Activated CD4-positive, alpha-beta T cell treated with anti-CD3 and anti-CD28 coated beads for 36 hours (primary cell): ENCODE measurements at regions of chr10 and their contacts with region 1.

Region 1: GRCh38 chr10:59865101-59865500 is 41.3 kb downstream of the CCDC6 start:
- DNase-seq: no peak
- ATAC-seq: peak; percentile 34
- H3K4me3 Mint-ChIP-seq: no peak overlapping the region
- H3K27ac Mint-ChIP-seq: no peak overlapping the region
- H3K4me1 Mint-ChIP-seq: peaks cover 65% of the 10 kb centered on the region
- H3K27me3 Mint-ChIP-seq: no peaks in the 10 kb centered on the region

Region 2: DNA sequence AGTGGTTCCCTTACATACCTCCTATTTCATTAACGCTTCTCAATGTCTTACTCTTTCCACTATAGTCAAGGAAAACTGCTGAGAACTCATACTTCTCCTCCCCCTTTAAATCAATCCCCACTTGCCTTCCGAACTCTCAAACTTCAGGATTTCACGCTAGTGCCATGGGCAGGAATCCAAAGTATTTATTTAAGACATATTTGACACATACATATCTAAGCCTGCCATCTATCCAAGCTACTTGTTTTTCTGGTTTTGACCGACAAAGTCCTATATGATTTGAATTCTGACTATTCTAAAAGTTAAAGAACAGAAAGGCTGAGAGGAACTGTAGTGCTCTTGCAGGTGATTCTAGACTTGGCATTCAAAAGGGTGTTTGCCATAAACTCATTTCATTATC is 10.5 kb before region 1 on chr10:
- CTCF ChIA-PET with region 1: interaction called, 11 read pairs
- POLR2A ChIA-PET with region 1: interaction called, 3 read pairs
- intact Hi-C with region 1: no loop called
- DNase-seq: no peak
- ATAC-seq: no peak
- H3K4me3 Mint-ChIP-seq: no peak overlapping the region
- H3K27ac Mint-ChIP-seq: no peak overlapping the region
- H3K4me1 Mint-ChIP-seq: peaks cover 32% of the 10 kb centered on the region
- H3K27me3 Mint-ChIP-seq: no peaks in the 10 kb centered on the region

Region 3: DNA sequence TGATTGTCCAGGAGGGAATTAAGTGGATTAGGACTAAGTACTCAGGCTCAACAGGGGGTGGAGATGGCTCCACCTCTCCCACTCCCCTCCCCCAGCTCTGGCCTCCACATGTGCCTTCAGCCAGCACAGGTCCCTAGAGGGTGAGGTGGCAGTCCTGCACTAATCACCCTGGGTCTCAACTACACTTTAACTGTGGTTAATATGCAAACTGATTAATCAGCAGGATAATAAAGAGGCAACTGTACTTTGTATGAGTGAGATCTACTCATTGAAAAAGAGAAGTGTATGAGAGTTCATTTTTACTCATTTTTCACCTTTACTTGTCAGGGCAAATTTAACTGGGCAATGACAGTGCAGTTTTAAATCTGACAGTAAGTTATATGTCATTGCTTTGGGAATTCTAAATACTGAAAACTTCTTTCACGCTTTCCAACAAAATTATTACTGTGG is 265.1 kb after region 1 on chr10:
- CTCF ChIA-PET with region 1: no interaction called
- POLR2A ChIA-PET with region 1: no interaction called
- intact Hi-C with region 1: no loop called
- DNase-seq: no peak
- ATAC-seq: no peak
- H3K4me3 Mint-ChIP-seq: no peak overlapping the region
- H3K27ac Mint-ChIP-seq: no peak overlapping the region
- H3K4me1 Mint-ChIP-seq: no peaks in the 10 kb centered on the region
- H3K27me3 Mint-ChIP-seq: no peaks in the 10 kb centered on the region